CD8-positive, alpha-beta T cell (primary cell): ENCODE measurements at regions of chr14 and their contacts with region 1.

Region 1: GRCh38 chr14:35786856-35787255 is 22.2 kb downstream of the RALGAPA1 start:
- DNase-seq: no peak
- ATAC-seq: no peak
- H3K4me3 ChIP-seq: no peak overlapping the region
- H3K4me3 Mint-ChIP-seq: no peak overlapping the region
- H3K27ac ChIP-seq: no peak overlapping the region
- H3K27ac Mint-ChIP-seq: no peak overlapping the region
- H3K4me1 ChIP-seq: peaks cover 13% of the 10 kb centered on the region
- H3K4me1 Mint-ChIP-seq: peaks cover 41% of the 10 kb centered on the region
- H3K27me3 ChIP-seq: no peaks in the 10 kb centered on the region
- H3K27me3 Mint-ChIP-seq: no peaks in the 10 kb centered on the region
- CTCF ChIP-seq: no peak

Region 2: DNA sequence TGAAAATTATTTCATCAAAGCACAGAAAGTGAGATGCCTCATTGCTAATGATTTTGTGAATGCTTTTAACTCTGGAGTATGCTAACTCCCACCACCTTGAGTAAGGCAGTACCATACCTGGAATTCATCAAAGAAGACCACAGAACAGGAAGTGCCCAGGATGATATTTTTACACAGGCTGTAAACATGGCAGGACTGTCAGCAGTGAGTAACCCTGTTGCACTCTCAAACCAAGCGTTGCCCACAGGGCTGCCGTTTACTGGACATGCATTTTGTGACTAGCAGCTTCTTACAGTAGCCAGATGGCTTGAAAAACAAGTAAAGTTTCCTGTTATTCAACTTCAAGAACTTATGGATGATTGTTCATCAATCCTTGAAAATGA is 20.2 kb before region 1 on chr14:
- CTCF ChIA-PET with region 1: interaction called, 3 read pairs
- POLR2A ChIA-PET with region 1: no interaction called
- intact Hi-C with region 1: loop called in 1 of 2 experiments (anchors 2 kb)
- DNase-seq: peak in 2 of 9 experiments; percentile 15 to 18
- ATAC-seq: peak; percentile 49
- H3K4me3 ChIP-seq: no peak overlapping the region
- H3K4me3 Mint-ChIP-seq: no peak overlapping the region
- H3K27ac ChIP-seq: no peak overlapping the region
- H3K27ac Mint-ChIP-seq: no peak overlapping the region
- H3K4me1 ChIP-seq: peaks cover 16% of the 10 kb centered on the region
- H3K4me1 Mint-ChIP-seq: peaks cover 18% of the 10 kb centered on the region
- H3K27me3 ChIP-seq: no peaks in the 10 kb centered on the region
- H3K27me3 Mint-ChIP-seq: no peaks in the 10 kb centered on the region
- CTCF ChIP-seq: no peak